Right cardiac atrium (tissue), 5 donors: ENCODE measurements at regions of chr17 and their contacts with region 1.

Region 1: DNA sequence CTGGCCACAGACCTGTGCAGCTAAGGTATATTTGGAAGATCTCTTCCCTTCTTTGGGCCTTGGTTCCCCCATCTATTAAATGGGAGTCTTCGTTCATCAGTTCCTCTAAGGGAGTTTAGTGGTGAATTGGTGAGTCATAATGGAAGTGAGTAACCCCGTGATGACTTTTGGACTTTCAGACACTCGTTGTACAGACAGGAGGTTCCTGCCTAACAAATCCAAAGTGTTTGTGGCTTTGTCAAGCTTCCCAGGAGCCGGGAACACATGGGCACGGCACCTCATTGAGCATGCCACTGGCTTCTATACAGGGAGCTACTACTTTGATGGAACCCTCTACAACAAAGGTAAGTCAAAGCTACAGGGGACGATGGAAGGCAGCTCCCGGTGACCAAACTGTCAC is 40.4 kb downstream of the WSCD1 start:
- DNase-seq: no peak
- ATAC-seq: no peak
- H3K4me3 ChIP-seq: no peak overlapping the region
- H3K27ac ChIP-seq: no peak overlapping the region
- H3K4me1 ChIP-seq: no peaks in the 10 kb centered on the region
- H3K27me3 ChIP-seq: no peaks in the 10 kb centered on the region

Region 2: DNA sequence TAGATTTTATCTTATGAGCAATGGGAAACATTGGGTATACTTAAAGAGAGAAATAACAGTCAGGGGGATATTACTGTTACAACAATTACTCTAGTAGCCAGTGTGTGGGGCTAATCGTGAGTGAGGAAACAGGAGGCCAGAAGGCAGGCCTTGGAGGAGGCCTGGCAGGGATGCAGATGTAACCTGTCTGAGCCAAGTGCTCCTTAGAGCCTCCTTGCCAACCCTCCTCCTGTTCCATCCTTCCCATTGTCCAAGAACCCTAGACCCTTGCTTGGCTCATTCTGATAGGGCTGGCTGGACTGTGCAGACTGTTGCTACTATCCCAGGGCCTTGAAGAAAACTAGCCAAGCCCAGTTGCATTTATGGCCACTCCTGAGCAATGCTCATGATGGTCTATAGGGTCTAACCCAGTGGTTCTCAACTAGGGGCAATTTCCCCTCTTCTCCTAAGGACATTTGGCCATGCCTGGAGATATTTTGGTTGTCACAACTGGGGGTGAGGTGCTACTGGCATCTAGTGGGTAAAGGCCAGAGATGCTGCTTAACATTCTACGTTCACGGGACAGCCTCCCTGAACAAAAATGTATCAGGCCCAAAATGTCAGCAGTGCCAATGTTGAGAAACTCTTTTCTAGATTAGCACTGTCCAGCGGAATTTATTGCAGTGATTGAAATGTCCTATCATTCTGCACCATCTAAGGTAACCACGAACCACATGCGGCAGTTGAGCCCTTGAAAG is 64.8 kb before region 1 on chr17:
- intact Hi-C with region 1: no loop called
- DNase-seq: no peak
- ATAC-seq: no peak
- H3K4me3 ChIP-seq: no peak overlapping the region
- H3K27ac ChIP-seq: no peak overlapping the region
- H3K4me1 ChIP-seq: no peaks in the 10 kb centered on the region
- H3K27me3 ChIP-seq: no peaks in the 10 kb centered on the region

Region 3: DNA sequence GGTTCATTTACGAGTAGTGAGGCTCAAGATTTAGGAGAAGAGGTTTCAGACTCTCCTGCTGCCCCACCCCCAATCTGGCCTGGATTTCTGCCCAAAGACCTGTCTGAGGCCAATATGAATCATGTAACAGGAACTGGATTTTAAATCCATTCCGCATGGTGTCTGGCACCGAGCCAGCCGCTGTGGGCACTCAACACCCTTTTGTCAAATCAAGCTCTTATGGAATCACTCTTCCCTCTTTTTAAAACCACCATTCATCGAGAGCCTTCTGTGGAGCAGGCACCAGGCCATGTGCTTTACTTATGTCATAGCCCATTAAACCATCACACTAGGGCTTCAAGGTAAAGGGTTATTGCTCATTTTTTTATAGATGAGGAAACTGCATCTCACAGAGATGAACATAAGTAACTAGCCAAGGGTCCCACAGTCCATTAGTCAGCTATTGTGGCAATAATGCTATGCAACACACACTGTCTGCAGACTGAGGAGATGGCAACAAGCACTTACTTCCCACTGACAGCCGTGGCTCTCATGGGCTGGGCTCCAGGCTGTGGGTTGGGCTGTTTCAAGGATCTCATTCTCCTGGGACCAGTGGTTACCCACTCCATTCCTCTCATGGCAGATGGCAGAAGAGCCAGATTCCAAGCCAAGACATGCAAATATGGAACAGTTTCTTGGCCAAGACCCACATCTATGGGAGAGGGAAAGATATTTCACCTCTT is 53.2 kb after region 1 on chr17:
- intact Hi-C with region 1: loop called in 1 of 4 experiments (anchors 5 kb)
- DNase-seq: peak in 1 of 3 donors; percentile 55
- ATAC-seq: no peak
- H3K4me3 ChIP-seq: no peak overlapping the region
- H3K27ac ChIP-seq: no peak overlapping the region
- H3K4me1 ChIP-seq: no peaks in the 10 kb centered on the region
- H3K27me3 ChIP-seq: no peaks in the 10 kb centered on the region

Region 4: GRCh38 chr17:6303664-6304063 is 193.1 kb after region 1 on chr17:
- intact Hi-C with region 1: no loop called
- DNase-seq: peak in 1 of 3 donors; percentile 13
- ATAC-seq: no peak
- H3K4me3 ChIP-seq: no peak overlapping the region
- H3K27ac ChIP-seq: no peak overlapping the region
- H3K4me1 ChIP-seq: no peaks in the 10 kb centered on the region
- H3K27me3 ChIP-seq: no peaks in the 10 kb centered on the region